IMR-90 (cell line): ENCODE measurements at regions of chr14 and their contacts with region 1.

Region 1: DNA sequence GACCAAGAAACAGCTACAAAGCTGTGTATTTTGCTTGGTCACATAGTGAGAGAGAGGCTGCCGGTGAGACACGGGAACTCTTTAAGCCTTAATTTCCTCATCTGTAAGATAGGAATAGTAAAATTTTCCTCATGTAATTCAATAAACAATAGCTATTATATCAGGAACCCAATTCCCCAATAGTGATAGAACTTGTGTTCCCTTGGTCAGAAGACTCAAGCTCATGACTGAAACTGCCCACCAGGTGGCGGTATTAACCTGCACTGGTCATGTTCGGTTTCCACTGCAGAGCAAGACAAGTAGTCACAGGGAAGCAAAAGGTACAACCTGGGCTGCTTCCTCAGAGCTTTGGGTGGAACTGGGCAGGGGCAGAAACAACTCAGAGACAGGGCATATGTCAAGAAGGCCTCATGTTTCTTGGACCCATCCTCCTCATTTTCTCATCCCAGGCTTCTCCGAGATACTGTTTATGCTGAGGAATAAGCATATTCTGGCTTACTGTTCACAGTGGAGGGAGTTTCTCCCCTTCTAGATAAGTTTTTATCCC is 4.2 kb upstream of the AJUBA start:
- DNase-seq: peak; percentile 86
- ATAC-seq: peak; percentile 37; the same call in 1 of the 2 replicates
- H3K4me3 ChIP-seq: no peak overlapping the region
- H3K27ac ChIP-seq: no peak overlapping the region
- H3K4me1 ChIP-seq: no peaks in the 10 kb centered on the region
- H3K27me3 ChIP-seq: no peaks in the 10 kb centered on the region
- CTCF ChIP-seq: peak; percentile 94
- POLR2A ChIP-seq: no peak
- RAD21 ChIP-seq: peak; percentile 92

Region 2: GRCh38 chr14:22556990-22557623 is 429.5 kb before region 1 on chr14:
- CTCF ChIA-PET with region 1: interaction called, 3 read pairs
- POLR2A ChIA-PET with region 1: no interaction called
- dilution Hi-C with region 1: no loop called
- in situ Hi-C with region 1: no loop called
- intact Hi-C with region 1: loop called (anchors 1 kb)
- DNase-seq: peak; percentile 64
- ATAC-seq: peak; percentile 94
- H3K4me3 ChIP-seq: peak overlapping the region; percentile 36
- H3K27ac ChIP-seq: peak overlapping the region; percentile 86
- H3K4me1 ChIP-seq: peaks cover 13% of the 10 kb centered on the region
- H3K27me3 ChIP-seq: no peaks in the 10 kb centered on the region
- CTCF ChIP-seq: peak; percentile 79
- POLR2A ChIP-seq: no peak
- RAD21 ChIP-seq: peak; percentile 79

Region 3: DNA sequence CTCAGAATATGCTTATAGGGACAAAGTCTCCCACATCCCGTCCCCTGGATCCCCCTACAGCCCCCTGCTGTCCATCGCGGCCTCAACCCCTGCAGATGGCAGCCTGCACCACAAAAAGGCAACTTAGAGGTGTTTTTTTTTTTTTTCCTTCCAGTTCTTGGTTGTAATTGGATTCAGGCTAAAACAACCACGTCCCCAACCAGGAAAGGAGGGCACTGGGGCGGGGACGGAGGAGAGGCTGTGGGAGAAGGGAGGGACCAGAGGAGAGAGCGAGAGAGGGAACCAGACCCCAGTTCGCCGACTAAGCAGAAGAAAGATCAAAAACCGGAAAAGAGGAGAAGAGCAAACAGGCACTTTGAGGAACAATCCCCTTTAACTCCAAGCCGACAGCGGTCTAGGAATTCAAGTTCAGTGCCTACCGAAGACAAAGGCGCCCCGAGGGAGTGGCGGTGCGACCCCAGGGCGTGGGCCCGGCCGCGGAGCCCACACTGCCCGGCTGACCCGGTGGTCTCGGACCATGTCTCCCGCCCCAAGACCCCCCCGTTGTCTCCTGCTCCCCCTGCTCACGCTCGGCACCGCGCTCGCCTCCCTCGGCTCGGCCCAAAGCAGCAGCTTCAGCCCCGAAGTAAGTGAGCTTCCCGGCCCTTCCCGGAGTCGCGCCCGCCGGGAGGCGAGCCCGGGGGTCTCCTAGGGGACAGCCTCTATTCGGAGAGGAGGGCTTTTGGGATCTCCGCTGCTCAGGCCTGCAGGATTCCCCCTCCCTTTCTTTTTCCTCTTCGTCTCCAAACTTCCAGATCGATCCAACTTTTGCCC is 150.1 kb before region 1 on chr14 and contains the start of gene MMP14:
- CTCF ChIA-PET with region 1: no interaction called
- POLR2A ChIA-PET with region 1: no interaction called
- dilution Hi-C with region 1: no loop called
- in situ Hi-C with region 1: no loop called
- intact Hi-C with region 1: loop called (anchors 5 kb)
- DNase-seq: peak; percentile 89
- ATAC-seq: peak; percentile 77
- H3K4me3 ChIP-seq: peak within 1 kb of the TSS; percentile 64
- H3K27ac ChIP-seq: peak within 1 kb of the TSS; percentile 96
- H3K4me1 ChIP-seq: peaks cover 13% of the 10 kb centered on the region
- H3K27me3 ChIP-seq: no peaks in the 10 kb centered on the region
- CTCF ChIP-seq: peak; percentile 68
- POLR2A ChIP-seq: peak; percentile 88
- RAD21 ChIP-seq: peak; percentile 61
- total RNA-seq, gene MMP14: 124 and 156 TPM in 2 replicates

Region 4: GRCh38 chr14:22929104-22929847 is 57.3 kb before region 1 on chr14 and contains the start of gene PRMT5:
- CTCF ChIA-PET with region 1: interaction called, 5 read pairs
- POLR2A ChIA-PET with region 1: no interaction called
- dilution Hi-C with region 1: no loop called
- in situ Hi-C with region 1: no loop called
- intact Hi-C with region 1: loop called (anchors 2 kb)
- DNase-seq: peak; percentile 100
- ATAC-seq: peak; percentile 97
- H3K4me3 ChIP-seq: peak within 1 kb of the TSS; percentile 64
- H3K27ac ChIP-seq: peak within 1 kb of the TSS; percentile 82
- H3K4me1 ChIP-seq: peaks cover 3% of the 10 kb centered on the region; the same call in 1 of the 2 replicates
- H3K27me3 ChIP-seq: no peaks in the 10 kb centered on the region
- CTCF ChIP-seq: no peak
- POLR2A ChIP-seq: peak; percentile 91
- RAD21 ChIP-seq: no peak
- total RNA-seq, gene PRMT5: 92.2 and 99.3 TPM in 2 replicates

Region 5: DNA sequence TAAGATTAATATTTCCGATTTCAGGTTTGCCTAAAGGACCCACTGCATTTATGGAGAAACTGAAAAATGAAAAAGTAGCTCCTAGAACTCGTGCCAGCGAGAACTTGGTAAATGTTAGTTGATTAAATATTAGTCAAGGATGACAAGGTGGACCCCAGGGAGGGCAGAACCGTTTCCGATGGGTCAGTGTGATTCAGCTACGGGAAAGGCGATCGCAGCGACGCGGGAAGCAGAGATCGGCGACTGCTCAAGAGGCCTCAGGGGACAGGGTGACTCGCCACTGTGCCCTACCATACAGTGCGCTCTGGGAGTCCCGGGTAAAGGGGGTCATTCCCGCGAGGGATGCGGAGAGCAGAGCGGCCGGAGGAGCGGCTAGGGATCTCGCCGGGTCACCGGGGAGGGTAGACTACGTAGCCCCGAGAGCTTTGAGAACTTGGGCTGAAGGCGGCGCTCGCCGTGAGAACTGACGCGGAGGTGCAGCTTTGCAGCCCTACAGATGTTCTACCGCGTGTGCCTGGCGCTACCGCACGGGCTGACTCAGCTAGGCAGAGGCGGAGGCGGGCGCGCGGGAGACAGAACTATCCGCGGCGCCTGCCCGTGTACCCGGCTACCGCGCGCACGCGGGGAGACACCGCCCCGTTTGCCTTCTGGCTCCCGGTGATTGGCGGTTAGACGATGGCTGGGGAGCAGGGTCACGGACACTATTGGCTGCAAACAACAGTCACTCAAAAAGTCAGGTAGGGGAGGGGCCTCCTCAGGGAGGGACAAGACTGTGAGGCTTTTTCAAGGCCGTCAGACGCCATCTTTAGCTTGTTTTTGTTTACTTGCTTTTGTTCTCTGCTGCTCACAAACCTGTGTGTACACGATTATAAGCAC is 20.2 kb after region 1 on chr14:
- CTCF ChIA-PET with region 1: interaction called, 14 read pairs
- POLR2A ChIA-PET with region 1: interaction called, 5 read pairs
- dilution Hi-C with region 1: no loop called
- in situ Hi-C with region 1: no loop called
- intact Hi-C with region 1: no loop called
- DNase-seq: peak; percentile 97
- ATAC-seq: peak; percentile 97
- H3K4me3 ChIP-seq: peak overlapping the region; percentile 58
- H3K27ac ChIP-seq: peak overlapping the region; percentile 82
- H3K4me1 ChIP-seq: peaks cover 2% of the 10 kb centered on the region; the same call in 1 of the 2 replicates
- H3K27me3 ChIP-seq: no peaks in the 10 kb centered on the region
- CTCF ChIP-seq: peak; percentile 32
- POLR2A ChIP-seq: peak; percentile 70
- RAD21 ChIP-seq: no peak

Region 6: DNA sequence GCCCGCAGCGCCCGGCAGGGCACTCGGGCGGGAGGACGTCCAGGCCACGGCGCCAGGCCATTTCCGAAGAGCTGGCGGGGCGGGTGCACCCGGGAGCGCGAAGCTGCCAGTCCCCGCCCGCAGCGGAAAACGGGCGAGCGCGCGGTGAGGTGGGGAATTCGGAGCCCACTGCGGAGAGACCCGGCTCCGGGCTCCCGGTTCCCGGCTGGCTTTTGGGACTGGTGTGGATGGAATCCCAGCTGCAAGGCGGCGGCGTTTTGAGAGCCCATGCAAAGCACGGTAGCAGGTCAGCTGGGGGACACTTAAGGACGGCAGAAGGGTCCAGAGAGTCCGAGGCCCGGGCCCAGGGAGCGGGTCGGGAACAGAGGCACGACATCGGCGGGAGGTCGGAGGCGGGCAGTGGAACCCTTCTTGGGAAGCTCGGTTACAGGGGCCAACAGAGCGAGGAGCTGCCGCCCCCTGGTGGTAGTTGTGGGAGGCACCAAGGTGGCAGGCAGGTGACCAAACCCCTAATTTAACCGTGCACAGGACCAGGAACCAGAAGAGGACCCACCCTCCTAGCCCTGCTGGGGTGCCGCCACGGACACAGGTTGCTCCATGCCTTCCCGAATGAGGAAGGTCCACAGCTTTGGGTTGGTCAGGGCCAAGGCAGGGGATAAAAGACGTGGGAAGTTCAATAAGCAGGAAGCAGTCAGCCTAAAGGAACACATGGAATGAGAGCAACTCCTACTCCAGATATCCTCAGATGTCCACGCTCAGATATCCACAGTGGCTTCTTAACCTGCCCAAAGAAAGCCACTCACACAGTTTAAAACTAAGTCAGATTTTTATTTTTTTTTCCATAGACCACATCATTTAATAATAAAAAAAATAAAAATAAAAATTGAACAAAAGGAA is 71.4 kb after region 1 on chr14:
- CTCF ChIA-PET with region 1: interaction called, 13 read pairs
- POLR2A ChIA-PET with region 1: interaction called, 4 read pairs
- dilution Hi-C with region 1: no loop called
- in situ Hi-C with region 1: loop called (anchors 5 kb)
- intact Hi-C with region 1: loop called (anchors 1 kb)
- DNase-seq: peak; percentile 76
- ATAC-seq: peak; percentile 55
- H3K4me3 ChIP-seq: peak overlapping the region; percentile 62
- H3K27ac ChIP-seq: peak overlapping the region; percentile 70
- H3K4me1 ChIP-seq: peaks cover 19% of the 10 kb centered on the region
- H3K27me3 ChIP-seq: no peaks in the 10 kb centered on the region
- CTCF ChIP-seq: peak; percentile 89
- POLR2A ChIP-seq: no peak; the same call in 1 of the 2 replicates
- RAD21 ChIP-seq: peak; percentile 82

Region 7: GRCh38 chr14:23186913-23187654 is 200.5 kb after region 1 on chr14:
- CTCF ChIA-PET with region 1: no interaction called
- POLR2A ChIA-PET with region 1: no interaction called
- dilution Hi-C with region 1: no loop called
- in situ Hi-C with region 1: no loop called
- intact Hi-C with region 1: loop called (anchors 10 kb)
- DNase-seq: peak; percentile 76
- ATAC-seq: peak; percentile 88
- H3K4me3 ChIP-seq: no peak overlapping the region
- H3K27ac ChIP-seq: no peak overlapping the region
- H3K4me1 ChIP-seq: no peaks in the 10 kb centered on the region
- H3K27me3 ChIP-seq: peaks cover 15% of the 10 kb centered on the region
- CTCF ChIP-seq: peak; percentile 95
- POLR2A ChIP-seq: no peak
- RAD21 ChIP-seq: peak; percentile 94